Activated CD4-positive, alpha-beta memory T cell treated with anti-CD3 and anti-CD28 coated beads for 36 hours (primary cell): ENCODE measurements at regions of chr9 and their contacts with region 1.

Region 1: DNA sequence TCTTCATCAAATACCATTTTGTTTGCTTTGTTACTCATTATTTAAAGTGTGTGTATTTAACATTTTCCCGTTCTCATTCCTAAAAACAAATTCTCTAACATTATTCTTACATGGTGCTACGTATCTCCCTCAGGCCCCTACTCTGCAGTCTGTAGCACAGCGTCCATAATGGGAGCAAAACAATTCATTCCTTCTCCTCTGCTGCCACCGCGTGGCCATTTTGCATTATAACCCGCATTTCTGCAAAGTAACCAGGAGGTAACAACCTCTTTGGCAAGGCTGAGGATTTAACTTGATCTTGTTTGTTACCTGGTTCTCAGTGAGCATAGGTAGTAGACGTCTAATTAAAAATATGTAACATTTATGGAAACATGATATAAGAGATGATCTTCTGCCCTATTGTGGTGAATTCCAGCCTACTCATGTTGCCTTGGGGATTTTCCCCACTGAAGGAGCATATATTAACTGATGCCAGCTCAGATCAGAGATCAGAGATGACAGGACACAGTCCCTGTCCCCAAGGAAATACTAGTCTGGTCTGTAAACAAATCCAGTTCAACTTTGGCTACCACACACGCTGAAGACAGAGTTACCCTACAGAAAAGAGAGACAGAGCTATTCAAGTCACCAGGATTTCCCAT is 10.5 kb downstream of the OR1K1 start:
- DNase-seq: peak; percentile 85
- H3K4me3 Mint-ChIP-seq: no peak overlapping the region
- H3K27ac Mint-ChIP-seq: no peak overlapping the region
- H3K4me1 Mint-ChIP-seq: peaks cover 29% of the 10 kb centered on the region
- H3K27me3 Mint-ChIP-seq: no peaks in the 10 kb centered on the region

Region 2: GRCh38 chr9:122099271-122099869 is 711.1 kb before region 1 on chr9:
- CTCF ChIA-PET with region 1: interaction called, 27 read pairs
- POLR2A ChIA-PET with region 1: no interaction called
- intact Hi-C with region 1: loop called (anchors 10 kb)
- DNase-seq: peak; percentile 83
- H3K4me3 Mint-ChIP-seq: peak overlapping the region; percentile 58
- H3K27ac Mint-ChIP-seq: no peak overlapping the region
- H3K4me1 Mint-ChIP-seq: peaks cover 12% of the 10 kb centered on the region
- H3K27me3 Mint-ChIP-seq: peaks cover 8% of the 10 kb centered on the region

Region 3: GRCh38 chr9:122350638-122351355 is 459.6 kb before region 1 on chr9:
- CTCF ChIA-PET with region 1: interaction called, 10 read pairs
- POLR2A ChIA-PET with region 1: no interaction called
- intact Hi-C with region 1: loop called (anchors 10 kb)
- DNase-seq: peak; percentile 85
- H3K4me3 Mint-ChIP-seq: no peak overlapping the region
- H3K27ac Mint-ChIP-seq: no peak overlapping the region
- H3K4me1 Mint-ChIP-seq: peaks cover 4% of the 10 kb centered on the region
- H3K27me3 Mint-ChIP-seq: peaks cover 32% of the 10 kb centered on the region

Region 4: DNA sequence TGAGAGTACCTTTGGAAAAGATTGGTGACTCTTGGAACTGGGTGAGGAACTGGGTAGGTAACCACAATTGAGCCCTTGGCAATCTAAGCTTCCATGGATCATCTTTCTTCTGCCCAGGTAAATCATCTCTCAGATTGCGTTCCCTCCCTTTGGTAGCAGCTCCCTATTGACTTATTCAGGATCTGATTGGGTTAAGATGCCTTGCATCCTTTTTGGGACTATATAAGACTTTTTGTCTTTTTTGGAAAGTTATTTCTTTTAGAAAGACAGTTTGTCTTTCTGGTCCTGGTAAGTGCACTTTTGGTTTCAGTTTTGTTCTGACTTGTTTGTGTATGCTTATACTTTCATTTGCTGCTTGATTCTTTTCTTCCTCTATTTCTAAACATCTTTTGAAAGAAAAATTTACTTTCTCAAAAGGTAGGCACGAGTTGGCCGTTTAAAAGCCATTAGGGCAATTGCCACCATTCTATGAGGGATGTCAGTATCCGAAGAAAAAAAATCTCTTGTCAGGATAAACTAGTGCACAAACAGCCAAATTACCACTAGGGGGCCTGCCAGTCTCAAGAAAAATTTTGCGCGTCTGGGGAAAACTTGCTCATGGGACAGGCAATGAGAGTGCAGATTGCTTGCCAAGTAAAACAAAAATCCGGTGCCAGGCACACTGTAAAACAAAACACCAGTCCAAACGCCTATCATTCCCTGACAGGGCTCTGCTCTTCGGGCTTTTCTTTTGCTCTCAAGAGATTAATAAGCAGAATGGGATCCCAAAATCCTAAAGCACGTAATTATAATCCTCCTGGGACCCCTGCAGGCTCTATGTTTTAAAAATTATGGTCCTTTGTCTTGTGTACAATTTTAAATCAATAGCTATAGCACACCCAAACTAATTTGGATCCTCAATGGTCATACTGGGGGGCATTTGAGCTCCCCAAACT is 345.5 kb before region 1 on chr9:
- CTCF ChIA-PET with region 1: interaction called, 27 read pairs
- POLR2A ChIA-PET with region 1: interaction called, 3 read pairs
- intact Hi-C with region 1: loop called (anchors 1 kb)
- DNase-seq: peak; percentile 75
- H3K4me3 Mint-ChIP-seq: peak overlapping the region; percentile 73
- H3K27ac Mint-ChIP-seq: peak overlapping the region; percentile 39
- H3K4me1 Mint-ChIP-seq: peaks cover 10% of the 10 kb centered on the region
- H3K27me3 Mint-ChIP-seq: peaks cover 25% of the 10 kb centered on the region

Region 5: DNA sequence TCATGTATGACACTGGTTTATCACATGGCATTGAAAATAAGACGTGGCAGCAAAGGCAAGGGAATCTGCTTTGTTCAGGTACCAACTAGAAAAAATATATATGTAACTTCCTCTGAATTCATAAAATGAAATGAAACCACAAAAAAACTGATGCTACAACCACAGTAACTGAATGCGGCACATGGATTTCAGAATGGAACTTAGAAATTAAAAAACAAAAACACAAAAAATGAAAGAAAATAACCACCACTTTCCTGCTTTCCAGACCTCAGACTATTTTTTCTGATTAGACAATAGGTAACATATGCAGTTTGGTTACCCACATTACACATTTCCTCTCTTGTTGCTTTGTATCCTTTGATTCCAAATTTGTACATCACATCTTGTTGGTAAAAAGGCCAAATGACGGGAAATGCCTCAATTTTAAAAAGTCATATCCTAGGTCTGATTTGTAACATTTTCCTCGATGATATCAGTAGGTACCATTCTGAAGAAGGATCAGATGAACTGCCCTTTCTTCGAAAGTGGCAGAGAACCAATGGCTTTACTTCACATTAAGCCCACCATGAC is 36.0 kb after region 1 on chr9:
- CTCF ChIA-PET with region 1: interaction called, 5 read pairs
- POLR2A ChIA-PET with region 1: interaction called, 4 read pairs
- intact Hi-C with region 1: loop called (anchors 1 kb)
- DNase-seq: no peak
- H3K4me3 Mint-ChIP-seq: no peak overlapping the region
- H3K27ac Mint-ChIP-seq: peak overlapping the region; percentile 74
- H3K4me1 Mint-ChIP-seq: peaks cover 28% of the 10 kb centered on the region
- H3K27me3 Mint-ChIP-seq: no peaks in the 10 kb centered on the region